CD4-positive, alpha-beta memory T cell (primary cell): ENCODE measurements at regions of chr17 and their contacts with region 1.

Region 1: DNA sequence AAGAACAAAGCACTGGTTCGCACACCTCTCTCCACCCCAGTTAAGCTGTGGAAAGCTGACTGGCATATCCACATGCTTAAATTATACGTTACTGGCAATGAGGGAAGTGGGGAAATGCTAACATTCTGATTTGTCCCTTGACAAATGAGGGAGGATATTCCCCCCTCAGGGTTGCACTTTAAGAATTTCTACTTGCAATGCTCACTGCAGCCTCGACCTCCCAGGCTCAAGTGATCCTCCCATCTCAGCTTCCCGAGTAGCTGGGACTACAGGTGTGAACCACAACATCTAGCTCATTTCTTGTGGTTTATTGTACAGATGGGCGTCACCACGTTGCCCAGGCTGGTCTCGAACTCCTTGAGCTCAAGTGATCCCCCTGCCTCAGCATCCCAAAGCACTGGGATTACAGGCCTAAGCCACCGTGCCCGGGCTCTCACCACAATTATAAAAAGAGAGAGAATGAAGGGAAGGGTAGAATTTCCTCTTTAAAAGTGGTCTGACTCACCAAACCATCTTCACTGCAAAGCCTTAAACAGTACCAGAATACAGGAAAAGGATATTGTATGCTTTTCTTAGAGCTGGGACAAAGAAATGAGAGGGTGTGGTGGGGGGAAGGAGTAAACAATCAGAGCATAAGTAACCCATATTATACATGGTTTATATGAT is 38.9 kb downstream of the KANSL1 start:
- DNase-seq: peak; percentile 19 to 65 (median 26)
- H3K4me3 ChIP-seq: peak overlapping the region in 1 of 2 donors; percentile 17
- H3K4me3 Mint-ChIP-seq: peak overlapping the region; percentile 33 to 84 (median 71)
- H3K27ac ChIP-seq: peak overlapping the region; percentile 40
- H3K27ac Mint-ChIP-seq: peak overlapping the region; percentile 63 to 92 (median 85)
- H3K4me1 ChIP-seq: peaks cover 98% of the 10 kb centered on the region
- H3K4me1 Mint-ChIP-seq: peaks cover 67 to 94% (median 84%) of the 10 kb centered on the region in 4 donors
- H3K27me3 ChIP-seq: no peaks in the 10 kb centered on the region
- H3K27me3 Mint-ChIP-seq: no peaks in the 10 kb centered on the region

Region 2: GRCh38 chr17:46115699-46116098 is 38.6 kb before region 1 on chr17:
- CTCF ChIA-PET with region 1: no interaction called
- POLR2A ChIA-PET with region 1: no interaction called
- intact Hi-C with region 1: loop called (anchors 5 kb)
- DNase-seq: no peak
- H3K4me3 ChIP-seq: no peak overlapping the region
- H3K4me3 Mint-ChIP-seq: peak overlapping the region in 4 of 8 donors; percentile 11 to 20 (median 14)
- H3K27ac ChIP-seq: no peak overlapping the region
- H3K27ac Mint-ChIP-seq: peak overlapping the region in 1 of 7 donors; percentile 31
- H3K4me1 ChIP-seq: peaks cover 90% of the 10 kb centered on the region
- H3K4me1 Mint-ChIP-seq: peaks cover 62 to 91% (median 74%) of the 10 kb centered on the region in 4 donors
- H3K27me3 ChIP-seq: no peaks in the 10 kb centered on the region
- H3K27me3 Mint-ChIP-seq: no peaks in the 10 kb centered on the region

Region 3: GRCh38 chr17:46139432-46140210 is 14.7 kb before region 1 on chr17:
- CTCF ChIA-PET with region 1: interaction called, 5 read pairs
- POLR2A ChIA-PET with region 1: interaction called, 13 read pairs
- intact Hi-C with region 1: no loop called
- DNase-seq: no peak
- H3K4me3 ChIP-seq: no peak overlapping the region
- H3K4me3 Mint-ChIP-seq: peak overlapping the region in 7 of 8 donors; percentile 6 to 70 (median 34)
- H3K27ac ChIP-seq: no peak overlapping the region
- H3K27ac Mint-ChIP-seq: peak overlapping the region in 5 of 7 donors; percentile 53 to 73 (median 59)
- H3K4me1 ChIP-seq: peaks cover 95% of the 10 kb centered on the region
- H3K4me1 Mint-ChIP-seq: peaks cover 75 to 98% (median 88%) of the 10 kb centered on the region in 4 donors
- H3K27me3 ChIP-seq: no peaks in the 10 kb centered on the region
- H3K27me3 Mint-ChIP-seq: no peaks in the 10 kb centered on the region

Region 4: GRCh38 chr17:46167826-46168569 is 13.7 kb after region 1 on chr17:
- CTCF ChIA-PET with region 1: interaction called, 19 read pairs
- POLR2A ChIA-PET with region 1: interaction called, 7 read pairs
- intact Hi-C with region 1: loop called (anchors 2 kb)
- DNase-seq: no peak
- H3K4me3 ChIP-seq: no peak overlapping the region
- H3K4me3 Mint-ChIP-seq: peak overlapping the region in 5 of 8 donors; percentile 1 to 61 (median 26)
- H3K27ac ChIP-seq: no peak overlapping the region
- H3K27ac Mint-ChIP-seq: peak overlapping the region in 2 of 7 donors; percentile 2 to 10
- H3K4me1 ChIP-seq: peaks cover 95% of the 10 kb centered on the region
- H3K4me1 Mint-ChIP-seq: peaks cover 65 to 94% (median 80%) of the 10 kb centered on the region in 4 donors
- H3K27me3 ChIP-seq: no peaks in the 10 kb centered on the region
- H3K27me3 Mint-ChIP-seq: no peaks in the 10 kb centered on the region